Heart right ventricle (tissue), 16 donors: ENCODE measurements at regions of chr10 and their contacts with region 1.

Region 1: GRCh38 chr10:110210674-110211464 is 3.5 kb downstream of the MXI1 start:
- DNase-seq: peak; percentile 97
- ATAC-seq: peak; percentile 89 to 94 (median 91)
- H3K4me3 ChIP-seq: peak overlapping the region; percentile 61 to 92 (median 82)
- H3K27ac ChIP-seq: peak overlapping the region; percentile 94 to 100 (median 98)
- H3K4me1 ChIP-seq: peaks cover 12 to 57% (median 52%) of the 10 kb centered on the region in 9 donors
- H3K27me3 ChIP-seq: no peaks in the 10 kb centered on the region
- CTCF ChIP-seq: no peak

Region 2: DNA sequence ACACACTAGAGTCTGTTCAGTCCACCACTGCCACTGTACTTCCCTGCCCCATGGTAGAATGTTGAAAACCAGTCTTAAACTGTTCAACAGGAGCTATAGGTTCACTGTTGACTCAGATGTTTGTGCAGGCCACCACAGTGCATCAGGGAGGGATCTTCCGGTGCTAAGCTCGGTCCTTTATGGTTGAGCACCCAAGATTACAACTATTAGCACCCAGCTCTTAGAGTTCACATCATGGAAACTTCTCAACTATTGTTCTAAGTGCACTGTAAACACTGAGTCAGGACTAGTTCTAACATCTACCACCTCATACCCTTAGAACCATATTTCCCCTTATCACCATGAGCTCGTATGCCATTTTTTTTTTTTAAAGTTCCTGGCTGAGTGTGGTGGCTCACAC is 100.5 kb before region 1 on chr10:
- intact Hi-C with region 1: no loop called
- DNase-seq: no peak
- ATAC-seq: peak in 1 of 8 donors; percentile 34
- H3K4me3 ChIP-seq: no peak overlapping the region
- H3K27ac ChIP-seq: no peak overlapping the region
- H3K4me1 ChIP-seq: peaks cover 0 to 18% (median 5%) of the 10 kb centered on the region in 9 donors
- H3K27me3 ChIP-seq: no peaks in the 10 kb centered on the region
- CTCF ChIP-seq: no peak

Region 3: GRCh38 chr10:110279407-110279986 is 68.6 kb after region 1 on chr10:
- intact Hi-C with region 1: loop called in 4 of 10 experiments (anchors 2 to 10 kb)
- DNase-seq: peak in 1 of 2 donors; percentile 71
- ATAC-seq: peak; percentile 46 to 84 (median 76)
- H3K4me3 ChIP-seq: peak overlapping the region in 1 of 10 donors; percentile 26
- H3K27ac ChIP-seq: peak overlapping the region in 6 of 10 donors; percentile 5 to 57 (median 41)
- H3K4me1 ChIP-seq: peaks cover 2 to 55% (median 30%) of the 10 kb centered on the region in 9 donors
- H3K27me3 ChIP-seq: no peaks in the 10 kb centered on the region
- CTCF ChIP-seq: peak; percentile 69 to 89 (median 78)